Endothelial cell of umbilical vein (primary cell): ENCODE measurements at regions of chr17 and their contacts with region 1.

Region 1: DNA sequence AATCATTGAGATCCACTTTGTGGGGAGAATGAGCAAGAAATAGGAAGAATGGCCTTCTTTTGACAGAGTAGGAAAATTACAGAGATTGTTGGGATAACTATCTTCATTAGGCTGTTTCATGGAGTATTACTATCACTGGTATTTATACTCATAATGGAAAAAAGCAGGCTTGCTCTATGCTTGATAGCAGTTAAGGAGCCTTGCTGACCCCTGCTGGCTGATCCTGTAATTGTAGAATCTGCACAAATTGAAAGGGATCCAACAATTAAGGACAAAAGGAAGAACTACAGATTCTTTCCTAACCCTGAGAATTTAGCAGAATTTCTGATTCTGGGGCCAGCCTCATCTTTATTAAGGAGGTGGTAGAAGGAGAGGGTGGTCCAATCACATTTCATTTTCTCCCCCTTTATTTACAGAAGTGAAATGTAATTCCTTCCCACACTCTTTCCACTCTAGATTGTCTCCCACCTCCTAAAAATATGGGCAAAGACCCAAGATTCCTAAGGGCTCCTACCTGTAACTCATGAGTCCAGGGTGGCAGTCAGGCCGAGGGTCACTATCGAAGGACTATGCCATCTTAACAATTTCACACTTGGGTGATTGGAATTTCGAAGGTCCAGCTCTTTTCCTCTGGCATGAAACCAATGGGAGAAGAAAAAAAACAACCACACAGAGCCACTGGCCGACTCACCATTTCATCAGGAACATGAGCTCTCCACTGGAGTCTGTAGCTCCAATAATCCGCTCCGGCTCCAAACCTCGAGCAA is 26.3 kb downstream of the NFE2L1 start:
- DNase-seq: peak; percentile 88
- H3K4me3 ChIP-seq: no peak overlapping the region
- H3K27ac ChIP-seq: no peak overlapping the region
- H3K4me1 ChIP-seq: no peaks in the 10 kb centered on the region
- H3K27me3 ChIP-seq: no peaks in the 10 kb centered on the region
- CTCF ChIP-seq: peak; percentile 63 to 69
- POLR2A ChIP-seq: no peak

Region 2: GRCh38 chr17:47978324-47978723 is 96.2 kb before region 1 on chr17:
- CTCF ChIA-PET with region 1: no interaction called
- POLR2A ChIA-PET with region 1: no interaction called
- dilution Hi-C with region 1: no loop called
- intact Hi-C with region 1: loop called (anchors 1 kb)
- DNase-seq: peak; percentile 48
- H3K4me3 ChIP-seq: no peak overlapping the region
- H3K27ac ChIP-seq: no peak overlapping the region
- H3K4me1 ChIP-seq: no peaks in the 10 kb centered on the region
- H3K27me3 ChIP-seq: no peaks in the 10 kb centered on the region
- CTCF ChIP-seq: peak; percentile 75 to 83
- POLR2A ChIP-seq: no peak

Region 3: DNA sequence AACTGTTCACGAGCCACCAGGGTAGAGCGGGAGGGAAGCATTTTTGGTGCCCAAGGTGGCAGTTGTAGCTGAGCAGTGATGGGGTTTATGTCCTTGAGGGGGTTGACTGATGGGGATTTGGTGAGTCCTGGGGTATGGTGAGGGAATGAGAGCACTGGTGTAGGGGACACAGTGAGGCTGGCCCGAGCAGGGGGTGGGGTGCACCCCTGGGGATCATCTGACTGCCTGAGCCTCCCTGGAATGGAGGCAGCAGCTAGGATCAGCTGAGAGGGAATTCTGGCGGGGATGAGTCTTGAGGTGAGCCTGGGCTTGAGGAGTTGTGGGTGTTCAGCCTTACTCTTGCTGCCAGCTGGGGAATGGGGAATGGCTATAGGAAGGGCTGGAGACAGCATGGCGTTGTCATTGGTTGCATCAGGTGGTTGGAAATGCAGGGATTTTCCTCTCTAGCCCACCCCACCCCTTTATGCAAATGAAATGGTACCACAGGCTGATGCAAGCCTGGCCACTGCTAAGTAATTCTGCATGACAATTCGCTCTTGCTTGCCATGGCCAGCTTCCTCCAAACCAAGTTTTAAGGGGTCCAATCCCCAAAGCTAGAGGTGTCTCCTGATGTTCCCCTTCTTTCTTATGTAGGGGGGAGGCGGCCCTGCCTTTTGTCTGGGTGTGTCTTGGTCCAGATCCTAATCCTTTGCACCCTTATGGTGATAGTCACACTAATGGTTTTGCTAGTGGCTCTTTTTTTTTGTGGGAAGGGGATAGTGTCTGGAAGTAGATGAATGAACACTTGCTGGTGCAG is 18.9 kb before region 1 on chr17:
- CTCF ChIA-PET with region 1: interaction called, 24 read pairs
- POLR2A ChIA-PET with region 1: no interaction called
- dilution Hi-C with region 1: no loop called
- intact Hi-C with region 1: loop called (anchors 1 kb)
- DNase-seq: no peak
- H3K4me3 ChIP-seq: no peak overlapping the region
- H3K27ac ChIP-seq: no peak overlapping the region
- H3K4me1 ChIP-seq: peaks cover 41% of the 10 kb centered on the region
- H3K27me3 ChIP-seq: no peaks in the 10 kb centered on the region
- CTCF ChIP-seq: no peak
- POLR2A ChIP-seq: no peak

Region 4: GRCh38 chr17:48101012-48101720 is 26.7 kb after region 1 on chr17 and contains the start of gene CBX1:
- CTCF ChIA-PET with region 1: interaction called, 44 read pairs
- POLR2A ChIA-PET with region 1: no interaction called
- dilution Hi-C with region 1: no loop called
- intact Hi-C with region 1: no loop called
- DNase-seq: peak; percentile 96
- H3K4me3 ChIP-seq: peak within 1 kb of the TSS; percentile 60 to 91 (median 82)
- H3K27ac ChIP-seq: peak within 1 kb of the TSS; percentile 58
- H3K4me1 ChIP-seq: peaks cover 8% of the 10 kb centered on the region
- H3K27me3 ChIP-seq: no peaks in the 10 kb centered on the region
- CTCF ChIP-seq: no peak
- POLR2A ChIP-seq: peak; percentile 50
- total RNA-seq, gene CBX1: 95.2 and 102 TPM in 2 replicates

Region 5: GRCh38 chr17:48618256-48618897 is 543.9 kb after region 1 on chr17:
- CTCF ChIA-PET with region 1: interaction called, 11 read pairs
- POLR2A ChIA-PET with region 1: no interaction called
- dilution Hi-C with region 1: no loop called
- intact Hi-C with region 1: no loop called
- DNase-seq: peak; percentile 83
- H3K4me3 ChIP-seq: peak overlapping the region; percentile 3 to 46 (median 30)
- H3K27ac ChIP-seq: no peak overlapping the region
- H3K4me1 ChIP-seq: peaks cover 27% of the 10 kb centered on the region
- H3K27me3 ChIP-seq: peaks cover 66 to 79% of the 10 kb centered on the region in 2 experiments
- CTCF ChIP-seq: peak; percentile 91 to 99
- POLR2A ChIP-seq: no peak